Motor neuron (in vitro differentiated cells): ENCODE measurements at regions of chr12 and their contacts with region 1.

Region 1: DNA sequence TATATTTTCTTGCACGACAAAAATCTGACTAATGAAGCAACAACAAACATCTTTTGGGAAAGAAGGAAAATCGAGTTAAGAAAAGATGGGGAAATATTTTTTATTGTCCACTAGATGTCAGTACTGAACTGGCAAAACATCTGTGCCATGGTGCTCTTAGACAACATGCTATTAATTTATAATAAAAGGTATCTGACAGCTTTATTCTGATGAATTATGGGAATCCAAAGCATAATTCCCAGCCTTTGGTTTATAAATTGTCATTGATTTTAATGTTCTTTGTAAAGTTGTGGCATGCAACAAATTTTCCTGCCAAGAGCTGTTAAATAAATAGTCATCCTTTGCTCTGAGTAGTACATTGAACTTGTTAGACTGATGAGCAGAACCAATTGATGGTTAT is 231.2 kb downstream of the ETNK1 start:
- ATAC-seq: peak in 5 of 8 experiments; percentile 19 to 52 (median 34)
- H3K4me3 ChIP-seq: no peak overlapping the region
- H3K27ac ChIP-seq: no peak overlapping the region
- H3K4me1 ChIP-seq: peaks cover 5 to 14% of the 10 kb centered on the region in 2 donors

Region 2: GRCh38 chr12:22409377-22410164 is 446.6 kb before region 1 on chr12:
- in situ Hi-C with region 1: no loop called
- ATAC-seq: peak in 3 of 8 experiments; percentile 25 to 37 (median 30)
- H3K4me3 ChIP-seq: no peak overlapping the region
- H3K27ac ChIP-seq: no peak overlapping the region
- H3K4me1 ChIP-seq: peaks cover 0 to 12% of the 10 kb centered on the region in 2 donors

Region 3: DNA sequence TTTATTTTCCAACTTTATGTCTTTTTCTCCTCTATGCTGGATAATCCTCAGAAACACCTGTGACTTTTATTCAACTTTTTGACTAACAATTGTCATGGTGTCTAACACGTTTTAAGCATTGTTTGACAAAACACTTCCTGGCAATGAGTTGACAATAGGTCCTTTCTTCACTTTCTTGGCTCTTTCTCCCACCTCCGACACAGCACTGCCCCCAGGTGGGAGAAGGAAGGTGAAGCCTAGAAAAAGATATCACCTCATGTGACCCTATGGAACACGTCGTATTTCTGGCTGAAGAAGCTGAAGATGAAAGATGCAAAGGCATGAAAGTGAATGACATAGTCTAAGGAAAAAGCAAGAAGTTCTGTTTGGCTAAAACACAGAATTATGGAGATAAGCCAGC is 198.8 kb after region 1 on chr12:
- in situ Hi-C with region 1: loop called in 1 of 9 experiments (anchors 25 kb)
- ATAC-seq: peak in 2 of 8 experiments; percentile 31 to 71
- H3K4me3 ChIP-seq: no peak overlapping the region
- H3K27ac ChIP-seq: no peak overlapping the region
- H3K4me1 ChIP-seq: no peaks in the 10 kb centered on the region